ENCODE measurements at regions of chr1 and their contacts with region 1.

Region 1: DNA sequence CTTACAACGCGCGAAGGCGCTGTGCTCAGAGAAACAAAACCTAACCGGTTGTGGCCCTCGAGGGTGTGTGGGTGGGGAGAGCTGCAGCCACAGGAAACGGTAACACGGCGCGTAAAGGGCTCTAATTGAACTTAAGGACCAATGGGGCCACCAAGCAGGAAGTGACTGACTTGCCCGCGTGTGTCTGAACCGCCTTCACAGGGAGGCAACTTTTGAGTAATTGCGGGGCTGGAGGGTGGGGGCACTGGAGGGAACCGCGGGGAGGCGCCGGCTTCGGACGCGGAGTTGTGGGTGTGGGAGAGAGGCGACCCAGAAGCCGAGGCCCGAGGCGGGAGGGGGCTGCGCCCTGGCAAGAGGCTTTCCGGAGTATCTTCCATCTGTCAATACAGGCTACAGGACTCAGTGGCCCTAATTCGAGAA is 577 bp upstream of the PNRC2 start:
- DNase-seq: peak; percentile 98
- H3K4me3 Mint-ChIP-seq: peak overlapping the region; percentile 99
- H3K27ac Mint-ChIP-seq: peak overlapping the region; percentile 100
- H3K4me1 Mint-ChIP-seq: peaks cover 59% of the 10 kb centered on the region
- H3K27me3 Mint-ChIP-seq: no peaks in the 10 kb centered on the region

Region 2: GRCh38 chr1:23344111-23344986 is 614.7 kb before region 1 on chr1 and contains the start of gene HNRNPR:
- CTCF ChIA-PET with region 1: no interaction called
- intact Hi-C with region 1: loop called (anchors 1 kb)
- DNase-seq: peak; percentile 100
- H3K4me3 Mint-ChIP-seq: peak within 1 kb of the TSS; percentile 83
- H3K27ac Mint-ChIP-seq: peak within 1 kb of the TSS; percentile 93
- H3K4me1 Mint-ChIP-seq: peaks cover 32% of the 10 kb centered on the region
- H3K27me3 Mint-ChIP-seq: no peaks in the 10 kb centered on the region
- total RNA-seq, gene HNRNPR: 203 to 208 TPM

Region 3: DNA sequence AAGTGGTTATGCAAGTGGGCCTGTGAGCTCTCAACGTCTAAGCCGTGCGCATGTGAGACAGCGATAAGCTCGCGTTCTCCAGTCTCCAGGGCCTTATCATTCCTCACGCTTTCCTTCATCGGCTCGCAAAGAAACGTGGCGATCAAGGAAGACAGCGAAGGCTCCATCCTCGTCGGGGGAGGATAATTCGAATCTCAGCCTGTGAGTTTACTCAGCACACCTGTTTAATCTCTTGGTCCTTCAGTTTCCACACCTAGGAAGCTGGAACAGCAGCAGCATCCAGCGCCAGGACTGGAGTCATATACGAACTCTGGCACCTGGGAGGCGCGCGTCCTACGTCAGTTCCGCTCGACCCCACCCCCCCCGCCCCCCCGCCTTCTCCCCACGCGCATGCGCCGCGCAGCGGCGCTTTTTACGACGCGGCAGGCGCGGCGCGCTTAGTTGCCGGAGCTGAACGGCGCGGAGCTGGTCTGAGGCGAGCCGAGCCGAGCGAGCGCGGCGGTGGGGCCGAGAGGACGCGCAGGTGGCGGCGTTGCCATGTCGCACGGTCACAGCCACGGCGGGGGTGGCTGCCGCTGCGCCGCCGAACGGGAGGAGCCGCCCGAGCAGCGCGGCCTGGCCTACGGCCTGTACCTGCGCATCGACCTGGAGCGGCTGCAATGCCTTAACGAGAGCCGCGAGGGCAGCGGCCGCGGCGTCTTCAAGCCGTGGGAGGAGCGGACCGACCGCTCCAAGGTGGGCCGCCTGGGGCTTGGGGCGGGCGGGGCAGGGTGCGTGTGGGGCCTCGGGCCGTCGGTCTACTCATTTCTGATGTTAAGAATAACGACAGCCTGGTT is 180.9 kb before region 1 on chr1 and contains the start of gene PITHD1:
- CTCF ChIA-PET with region 1: no interaction called
- intact Hi-C with region 1: loop called (anchors 1 kb)
- DNase-seq: peak; percentile 81
- H3K4me3 Mint-ChIP-seq: peak within 1 kb of the TSS; percentile 86
- H3K27ac Mint-ChIP-seq: peak within 1 kb of the TSS; percentile 88
- H3K4me1 Mint-ChIP-seq: peaks cover 50% of the 10 kb centered on the region
- H3K27me3 Mint-ChIP-seq: no peaks in the 10 kb centered on the region
- total RNA-seq, gene PITHD1: 73.8 to 75.1 TPM

Region 4: GRCh38 chr1:23825076-23825761 is 133.8 kb before region 1 on chr1 and contains the start of gene HMGCL:
- CTCF ChIA-PET with region 1: no interaction called
- intact Hi-C with region 1: loop called (anchors 2 kb)
- DNase-seq: peak; percentile 92
- H3K4me3 Mint-ChIP-seq: peak within 1 kb of the TSS; percentile 91
- H3K27ac Mint-ChIP-seq: peak within 1 kb of the TSS; percentile 92
- H3K4me1 Mint-ChIP-seq: peaks cover 15% of the 10 kb centered on the region
- H3K27me3 Mint-ChIP-seq: no peaks in the 10 kb centered on the region
- total RNA-seq, gene HMGCL: 31.5 to 34.5 TPM

Region 5: GRCh38 chr1:23979878-23980724 is 21.1 kb after region 1 on chr1 and contains the start of gene SRSF10:
- CTCF ChIA-PET with region 1: interaction called, 6 read pairs
- intact Hi-C with region 1: loop called (anchors 1 kb)
- DNase-seq: peak; percentile 99
- H3K4me3 Mint-ChIP-seq: peak within 1 kb of the TSS; percentile 94
- H3K27ac Mint-ChIP-seq: peak within 1 kb of the TSS; percentile 99
- H3K4me1 Mint-ChIP-seq: peaks cover 31% of the 10 kb centered on the region
- H3K27me3 Mint-ChIP-seq: no peaks in the 10 kb centered on the region
- total RNA-seq, gene SRSF10: 169 to 178 TPM

Region 6: GRCh38 chr1:24186993-24187805 is 228.1 kb after region 1 on chr1 and contains the start of gene IFNLR1:
- CTCF ChIA-PET with region 1: no interaction called
- intact Hi-C with region 1: loop called (anchors 2 kb)
- DNase-seq: peak; percentile 92
- H3K4me3 Mint-ChIP-seq: peak within 1 kb of the TSS; percentile 79
- H3K27ac Mint-ChIP-seq: peak within 1 kb of the TSS; percentile 18
- H3K4me1 Mint-ChIP-seq: peaks cover 50% of the 10 kb centered on the region
- H3K27me3 Mint-ChIP-seq: peaks cover 3% of the 10 kb centered on the region
- total RNA-seq, gene IFNLR1: 4.3 to 4.6 TPM

Region 7: DNA sequence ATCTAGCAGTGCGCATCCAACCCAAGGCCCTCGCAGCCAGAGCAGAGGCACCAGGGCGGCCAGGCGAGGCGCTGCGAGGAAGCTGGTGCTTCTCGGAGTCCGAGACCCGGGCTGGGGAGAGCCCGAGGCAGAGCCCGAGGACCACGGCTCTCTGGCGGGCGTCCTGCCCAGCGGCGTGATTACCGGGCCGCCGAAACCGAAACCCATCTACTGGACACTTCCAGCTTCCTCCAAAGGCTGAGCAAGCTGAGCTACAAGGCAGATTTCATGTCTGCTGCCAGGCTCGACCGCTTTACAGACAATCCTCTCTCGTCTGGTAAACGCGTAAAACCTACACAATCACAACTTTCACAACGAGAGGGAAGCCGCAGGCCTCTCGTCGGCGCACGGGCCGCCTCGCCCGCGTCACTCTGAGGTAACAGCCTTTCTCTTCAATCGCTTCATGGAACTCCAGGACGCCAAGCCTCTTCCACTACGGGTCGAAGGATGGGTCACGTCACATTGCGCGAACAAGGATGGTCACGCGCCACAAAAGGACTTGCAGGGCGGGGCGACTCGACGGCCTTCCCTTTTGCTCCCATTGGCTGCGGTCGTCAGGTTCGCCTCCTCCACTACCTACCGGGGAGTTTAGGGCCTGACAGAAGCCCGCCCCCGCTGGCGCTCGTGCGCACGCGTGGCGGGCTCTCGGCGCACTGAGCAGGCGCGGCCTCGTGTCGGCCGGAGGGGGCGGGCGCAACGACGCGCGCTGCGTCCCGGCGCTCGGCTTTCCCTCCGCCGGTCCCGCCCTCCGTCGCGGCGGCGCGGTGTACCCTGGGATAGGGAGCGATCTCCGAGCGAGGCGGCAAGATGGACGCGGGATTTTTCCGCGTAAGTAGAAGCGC is 683.7 kb after region 1 on chr1 and contains the start of gene SRRM1:
- CTCF ChIA-PET with region 1: no interaction called
- intact Hi-C with region 1: loop called (anchors 1 kb)
- DNase-seq: peak; percentile 100
- H3K4me3 Mint-ChIP-seq: peak within 1 kb of the TSS; percentile 83
- H3K27ac Mint-ChIP-seq: peak within 1 kb of the TSS; percentile 98
- H3K4me1 Mint-ChIP-seq: peaks cover 48% of the 10 kb centered on the region
- H3K27me3 Mint-ChIP-seq: no peaks in the 10 kb centered on the region
- total RNA-seq, gene SRRM1: 226 to 235 TPM